ENCODE measurements at regions of chr17 and their contacts with region 1.

Region 1: GRCh38 chr17:50909765-50910605 is 43.8 kb upstream of the TOB1 start:
- DNase-seq: no peak
- H3K4me3 ChIP-seq: no peak overlapping the region
- H3K27ac ChIP-seq: no peak overlapping the region
- H3K4me1 ChIP-seq: peaks cover 4 to 18% (median 9%) of the 10 kb centered on the region in 4 donors
- H3K27me3 ChIP-seq: no peaks in the 10 kb centered on the region
- CTCF ChIP-seq: no peak

Region 2: GRCh38 chr17:50771991-50772785 is 137.8 kb before region 1 on chr17:
- intact Hi-C with region 1: no loop called
- DNase-seq: peak in 1 of 2 donors; percentile 19
- H3K4me3 ChIP-seq: no peak overlapping the region
- H3K27ac ChIP-seq: no peak overlapping the region
- H3K4me1 ChIP-seq: no peaks in the 10 kb centered on the region
- H3K27me3 ChIP-seq: no peaks in the 10 kb centered on the region
- CTCF ChIP-seq: no peak

Region 3: GRCh38 chr17:50828508-50829170 is 81.3 kb before region 1 on chr17:
- intact Hi-C with region 1: no loop called
- DNase-seq: no peak
- H3K4me3 ChIP-seq: no peak overlapping the region
- H3K27ac ChIP-seq: no peak overlapping the region
- H3K4me1 ChIP-seq: peaks cover 0 to 25% (median 5%) of the 10 kb centered on the region in 4 donors
- H3K27me3 ChIP-seq: peaks cover 0 to 5% of the 10 kb centered on the region in 2 donors
- CTCF ChIP-seq: no peak

Region 4: GRCh38 chr17:50877838-50878237 is 32.1 kb before region 1 on chr17:
- intact Hi-C with region 1: loop called (anchors 5 kb)
- DNase-seq: no peak
- H3K4me3 ChIP-seq: no peak overlapping the region
- H3K27ac ChIP-seq: no peak overlapping the region
- H3K4me1 ChIP-seq: peaks cover 0 to 20% (median 4%) of the 10 kb centered on the region in 4 donors
- H3K27me3 ChIP-seq: no peaks in the 10 kb centered on the region
- CTCF ChIP-seq: no peak

Measured in tibial artery (tissue), 4 donors.